AG04449 (cell line): ENCODE measurements at regions of chr1 and their contacts with region 1.

Region 1: DNA sequence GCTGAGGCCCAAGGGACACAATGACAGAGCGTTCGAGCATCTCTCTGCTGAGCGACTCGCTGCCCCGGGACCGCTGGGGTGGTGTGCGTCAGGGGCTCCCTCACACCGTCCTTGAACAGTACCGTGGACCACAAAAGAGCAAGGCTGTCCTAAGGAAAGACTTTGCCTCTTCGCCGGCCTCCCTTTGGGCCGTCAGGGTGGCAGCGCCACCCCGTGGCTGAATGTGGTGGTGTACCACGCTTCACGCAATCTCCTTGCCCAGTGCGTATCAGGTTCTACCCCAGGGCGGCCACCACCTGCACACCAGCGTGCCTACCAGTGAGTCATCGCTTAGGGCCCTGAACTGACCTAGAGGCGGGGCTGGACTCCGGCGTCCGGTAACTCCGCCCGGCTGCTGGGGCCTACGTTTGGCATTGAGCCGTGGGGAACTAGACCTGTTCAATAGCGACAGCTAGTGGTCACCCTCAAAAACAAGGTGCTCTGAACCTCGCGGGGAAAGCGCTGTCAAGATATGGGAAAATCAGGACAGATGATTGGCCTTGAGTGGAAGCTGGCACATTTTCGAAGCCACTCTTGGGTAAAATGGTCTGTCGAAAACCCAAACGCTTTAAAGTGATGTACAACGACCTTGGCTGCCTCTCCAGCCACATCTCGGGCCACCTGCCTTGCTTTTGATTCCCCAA is 8.1 kb upstream of the TRAF3IP3 start:
- DNase-seq: no peak
- H3K4me3 ChIP-seq: peak overlapping the region; percentile 45
- CTCF ChIP-seq: peak; percentile 79

Region 2: GRCh38 chr1:209576798-209577197 is 170.9 kb before region 1 on chr1:
- CTCF ChIA-PET with region 1: interaction called, 145 read pairs
- POLR2A ChIA-PET with region 1: no interaction called
- DNase-seq: no peak
- H3K4me3 ChIP-seq: no peak overlapping the region
- CTCF ChIP-seq: peak; percentile 96

Region 3: DNA sequence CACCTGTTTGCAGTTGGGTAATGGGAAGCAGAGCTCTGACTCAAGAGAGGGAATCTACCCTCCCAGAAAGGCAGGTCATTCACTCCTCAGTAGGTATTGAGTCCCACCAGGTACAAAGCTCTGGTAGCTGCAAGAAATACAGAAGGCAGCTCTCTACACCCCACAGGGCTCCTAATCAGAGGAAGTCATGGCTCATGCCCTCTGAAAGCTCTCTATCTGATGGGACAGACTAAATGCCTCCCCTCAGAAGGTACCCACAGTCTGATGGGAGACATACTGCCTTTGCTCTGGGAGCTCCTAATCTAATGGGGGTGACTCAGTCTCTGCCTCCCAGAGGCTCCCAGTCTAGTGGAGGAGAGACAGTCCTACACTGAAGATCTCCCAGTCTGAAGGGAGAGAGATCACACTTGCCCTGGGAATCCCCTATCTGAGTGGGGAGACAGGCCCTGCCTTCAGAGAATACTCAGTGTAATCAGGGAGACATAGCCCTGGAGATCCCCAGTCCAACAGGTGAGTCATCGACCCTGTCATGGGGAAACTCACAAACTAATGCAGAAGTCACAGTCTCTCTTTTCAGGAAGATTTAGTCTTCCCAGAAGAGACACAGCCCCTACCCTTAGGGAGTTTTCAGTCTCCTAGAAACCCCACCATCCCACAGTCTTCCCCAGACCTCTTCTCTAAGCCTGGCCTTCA is 140.5 kb before region 1 on chr1:
- CTCF ChIA-PET with region 1: interaction called, 12 read pairs
- POLR2A ChIA-PET with region 1: no interaction called
- DNase-seq: peak; percentile 21
- H3K4me3 ChIP-seq: no peak overlapping the region
- CTCF ChIP-seq: no peak

Region 4: DNA sequence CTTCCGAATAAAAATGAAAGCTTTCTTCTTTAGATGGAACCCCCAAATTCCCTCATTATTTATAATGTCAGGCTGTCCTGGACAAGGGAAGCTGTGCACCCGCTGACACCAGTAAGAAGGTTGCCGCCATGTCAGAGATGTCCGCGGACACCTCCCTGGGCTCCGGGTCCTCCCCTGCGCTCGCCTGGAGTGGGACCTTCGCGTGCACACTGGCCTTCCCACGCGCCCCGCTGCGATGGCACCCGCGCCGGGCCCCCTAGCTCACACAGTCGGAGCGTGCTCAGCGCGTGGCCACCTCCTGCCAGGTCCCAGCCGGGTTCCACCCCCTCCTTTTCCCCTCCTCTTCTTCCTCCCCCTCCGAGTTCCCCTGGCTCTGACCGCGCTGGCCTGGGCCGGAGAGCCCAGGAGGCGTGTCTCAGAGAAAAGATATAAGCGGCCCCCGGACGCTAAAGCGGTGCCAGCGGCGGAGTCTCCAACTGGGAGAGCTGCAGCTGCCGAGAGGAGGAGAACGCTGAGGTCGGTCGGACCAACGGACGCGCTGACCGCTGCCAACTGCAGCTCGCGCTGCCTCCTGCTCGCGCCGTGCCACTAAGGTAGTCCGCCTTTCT is 72.7 kb before region 1 on chr1 and contains the start of gene G0S2:
- CTCF ChIA-PET with region 1: interaction called, 19 read pairs
- POLR2A ChIA-PET with region 1: no interaction called
- DNase-seq: no peak
- H3K4me3 ChIP-seq: peak within 1 kb of the TSS; percentile 58
- CTCF ChIP-seq: no peak

Region 5: GRCh38 chr1:209723756-209724693 is 23.7 kb before region 1 on chr1:
- CTCF ChIA-PET with region 1: interaction called, 70 read pairs
- POLR2A ChIA-PET with region 1: no interaction called
- DNase-seq: no peak
- H3K4me3 ChIP-seq: no peak overlapping the region
- CTCF ChIP-seq: no peak

Region 6: DNA sequence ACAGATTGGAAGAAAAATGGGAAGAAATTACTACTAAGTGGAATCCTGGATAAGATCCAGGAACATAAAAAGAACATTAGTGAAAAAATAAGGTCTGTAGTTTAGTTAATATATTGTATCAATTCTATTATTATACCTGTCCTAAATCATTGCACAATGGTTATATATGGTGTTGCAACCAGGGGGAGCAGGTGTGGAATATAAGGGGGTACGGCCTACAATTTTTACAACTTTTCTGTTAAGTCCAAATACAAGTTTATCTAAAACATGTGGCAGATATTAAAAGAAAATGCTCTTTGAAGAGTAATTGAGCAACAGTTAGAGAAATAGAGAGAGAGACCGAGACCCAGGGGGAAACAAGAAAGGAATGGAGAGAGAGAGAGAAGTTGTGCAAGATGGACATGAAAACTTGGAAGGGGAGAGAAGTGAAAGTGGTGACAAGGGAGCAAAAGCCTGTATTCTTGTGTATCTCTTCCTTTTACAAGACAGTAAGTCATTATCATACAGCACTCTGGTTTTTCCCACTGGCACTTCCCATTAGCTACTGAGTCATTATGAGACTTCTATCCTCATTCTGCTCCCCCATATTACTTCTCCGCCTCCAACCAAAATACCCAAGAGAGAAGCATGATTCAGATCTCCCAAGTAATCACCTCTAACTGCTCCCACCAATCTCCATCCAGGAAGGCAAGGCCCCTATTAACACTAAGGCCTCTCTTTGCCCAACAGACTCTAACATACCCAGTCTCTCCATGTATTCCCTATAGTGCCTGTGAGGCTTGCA is 14.1 kb before region 1 on chr1:
- CTCF ChIA-PET with region 1: interaction called, 70 read pairs
- POLR2A ChIA-PET with region 1: no interaction called
- DNase-seq: no peak
- H3K4me3 ChIP-seq: no peak overlapping the region
- CTCF ChIP-seq: no peak

Region 7: GRCh38 chr1:209769171-209769904 is 21.6 kb after region 1 on chr1:
- CTCF ChIA-PET with region 1: interaction called, 32 read pairs
- POLR2A ChIA-PET with region 1: no interaction called
- DNase-seq: peak; percentile 77
- H3K4me3 ChIP-seq: no peak overlapping the region
- CTCF ChIP-seq: no peak